Vagina (tissue), 2 donors: ENCODE measurements at regions of chr1 and their contacts with region 1.

Region 1: GRCh38 chr1:157992031-157992832 is 1.2 kb upstream of the KIRREL1 start:
- DNase-seq: peak in 1 of 2 donors; percentile 95
- H3K4me3 ChIP-seq: peak overlapping the region; percentile 92 to 97
- H3K27ac ChIP-seq: peak overlapping the region; percentile 98
- H3K4me1 ChIP-seq: peaks cover 32% of the 10 kb centered on the region
- H3K27me3 ChIP-seq: no peaks in the 10 kb centered on the region
- CTCF ChIP-seq: peak; percentile 75 to 97 (median 80)
- POLR2A ChIP-seq: no peak

Region 2: DNA sequence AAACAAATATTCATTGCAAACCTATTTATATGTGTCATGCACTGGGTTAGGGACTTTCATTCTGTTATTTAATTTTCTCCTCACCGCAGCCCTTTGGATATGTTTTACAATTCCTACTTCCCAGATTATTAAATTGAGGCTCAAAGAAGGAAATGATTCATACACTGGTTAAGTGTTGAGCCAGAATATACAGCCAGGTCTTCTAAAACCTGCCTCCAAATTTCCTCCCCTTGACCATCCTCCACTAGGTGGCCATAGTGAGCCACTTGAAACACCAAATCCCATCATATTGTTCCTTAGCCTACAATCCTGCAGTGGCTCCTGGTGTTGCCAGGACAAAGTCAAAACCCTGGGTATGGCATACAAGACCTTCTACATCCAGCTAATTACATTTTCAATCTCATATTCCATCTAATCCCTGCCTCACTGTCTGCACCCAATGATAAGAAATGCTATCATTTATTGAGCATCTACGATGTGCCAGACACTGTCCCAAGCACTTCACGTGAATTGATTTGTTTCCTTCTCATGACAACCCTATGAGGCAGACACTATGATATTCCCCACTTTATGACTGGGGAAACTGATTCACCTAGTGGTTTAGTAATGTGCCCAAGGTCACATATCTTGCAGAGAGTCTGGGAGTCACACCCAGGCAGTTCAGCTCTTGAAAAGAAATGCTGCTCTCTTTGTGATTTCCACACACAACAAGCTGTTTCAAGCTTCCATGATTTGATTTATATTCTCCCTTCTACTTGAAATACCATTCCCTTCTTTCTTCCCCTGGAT is 22.3 kb before region 1 on chr1:
- intact Hi-C with region 1: no loop called
- DNase-seq: no peak
- H3K4me3 ChIP-seq: no peak overlapping the region
- H3K27ac ChIP-seq: no peak overlapping the region
- H3K4me1 ChIP-seq: peaks cover 14% of the 10 kb centered on the region
- H3K27me3 ChIP-seq: no peaks in the 10 kb centered on the region
- CTCF ChIP-seq: peak; percentile 25 to 47 (median 46)
- POLR2A ChIP-seq: no peak

Region 3: DNA sequence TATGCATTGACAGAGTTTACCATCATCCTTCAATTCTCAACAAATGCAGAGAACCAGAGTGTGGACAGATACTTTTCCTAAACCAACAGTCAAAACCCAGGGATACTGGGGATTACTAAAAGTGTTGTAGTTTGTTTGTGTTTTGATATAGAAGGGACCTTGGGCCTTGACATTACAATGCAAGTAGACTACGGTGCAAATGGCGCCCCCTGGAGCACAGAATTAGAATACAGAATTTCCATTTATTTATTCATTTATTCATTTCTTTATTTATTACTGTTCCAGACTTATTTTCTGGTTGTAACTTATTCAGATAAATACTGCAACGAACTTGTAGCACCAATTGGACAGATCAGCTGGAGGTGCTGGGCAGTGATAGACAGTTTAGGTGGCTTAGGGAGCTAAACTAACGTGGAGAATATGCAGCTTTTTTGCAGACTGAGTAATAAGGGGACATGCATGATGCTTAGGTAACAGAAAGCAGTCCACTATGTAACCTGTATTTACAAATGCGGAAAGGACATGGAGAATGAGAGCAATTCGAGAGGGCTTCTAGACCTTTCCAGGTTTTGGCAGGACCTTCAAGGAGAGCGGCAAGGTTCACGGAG is 43.8 kb after region 1 on chr1:
- intact Hi-C with region 1: loop called (anchors 5 kb)
- DNase-seq: no peak
- H3K4me3 ChIP-seq: no peak overlapping the region
- H3K27ac ChIP-seq: peak overlapping the region; percentile 36
- H3K4me1 ChIP-seq: peaks cover 39% of the 10 kb centered on the region
- H3K27me3 ChIP-seq: no peaks in the 10 kb centered on the region
- CTCF ChIP-seq: peak; percentile 73 to 75 (median 75)
- POLR2A ChIP-seq: no peak

Region 4: GRCh38 chr1:158087320-158087927 is 95.2 kb after region 1 on chr1:
- intact Hi-C with region 1: loop called (anchors 2 kb)
- DNase-seq: no peak
- H3K4me3 ChIP-seq: no peak overlapping the region
- H3K27ac ChIP-seq: no peak overlapping the region
- H3K4me1 ChIP-seq: no peaks in the 10 kb centered on the region
- H3K27me3 ChIP-seq: no peaks in the 10 kb centered on the region
- CTCF ChIP-seq: peak; percentile 49 to 76 (median 71)
- POLR2A ChIP-seq: no peak